Activated naive CD4-positive, alpha-beta T cell treated with anti-CD3 and anti-CD28 coated beads, Interleukin-2, amount 10 ng/mL, durations not matched to agents 7 days and 5 days (primary cell): ENCODE measurements at regions of chr10 and their contacts with region 1.

Region 1: DNA sequence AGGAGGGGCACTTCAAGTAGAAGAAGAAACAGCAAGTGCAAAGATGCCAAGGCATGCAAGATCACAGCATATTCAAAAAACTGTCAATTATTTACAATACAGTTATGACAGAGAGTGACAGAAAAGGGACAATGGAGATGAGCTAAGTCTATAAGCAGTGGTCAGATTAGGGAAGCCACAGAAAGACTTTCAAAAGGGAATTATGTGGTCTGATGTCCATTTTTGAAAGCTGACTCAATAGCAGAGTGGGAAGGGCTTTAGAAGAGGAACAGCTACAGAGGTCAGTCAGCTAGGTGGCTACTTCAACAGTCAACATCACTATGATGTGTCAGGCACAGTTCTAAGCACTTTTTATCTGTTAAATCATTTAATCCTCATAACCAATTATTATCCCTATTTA is 45.2 kb upstream of the SPOCK2 start:
- DNase-seq: no peak
- H3K4me3 Mint-ChIP-seq: no peak overlapping the region
- H3K27ac Mint-ChIP-seq: peak overlapping the region; percentile 1
- H3K4me1 Mint-ChIP-seq: peaks cover 48% of the 10 kb centered on the region
- H3K27me3 Mint-ChIP-seq: no peaks in the 10 kb centered on the region

Region 2: GRCh38 chr10:72218325-72218724 is 84.8 kb after region 1 on chr10:
- CTCF ChIA-PET with region 1: interaction called, 42 read pairs
- DNase-seq: no peak
- H3K4me3 Mint-ChIP-seq: peak overlapping the region; percentile 57
- H3K27ac Mint-ChIP-seq: peak overlapping the region; percentile 81
- H3K4me1 Mint-ChIP-seq: peaks cover 62% of the 10 kb centered on the region
- H3K27me3 Mint-ChIP-seq: no peaks in the 10 kb centered on the region

Region 3: DNA sequence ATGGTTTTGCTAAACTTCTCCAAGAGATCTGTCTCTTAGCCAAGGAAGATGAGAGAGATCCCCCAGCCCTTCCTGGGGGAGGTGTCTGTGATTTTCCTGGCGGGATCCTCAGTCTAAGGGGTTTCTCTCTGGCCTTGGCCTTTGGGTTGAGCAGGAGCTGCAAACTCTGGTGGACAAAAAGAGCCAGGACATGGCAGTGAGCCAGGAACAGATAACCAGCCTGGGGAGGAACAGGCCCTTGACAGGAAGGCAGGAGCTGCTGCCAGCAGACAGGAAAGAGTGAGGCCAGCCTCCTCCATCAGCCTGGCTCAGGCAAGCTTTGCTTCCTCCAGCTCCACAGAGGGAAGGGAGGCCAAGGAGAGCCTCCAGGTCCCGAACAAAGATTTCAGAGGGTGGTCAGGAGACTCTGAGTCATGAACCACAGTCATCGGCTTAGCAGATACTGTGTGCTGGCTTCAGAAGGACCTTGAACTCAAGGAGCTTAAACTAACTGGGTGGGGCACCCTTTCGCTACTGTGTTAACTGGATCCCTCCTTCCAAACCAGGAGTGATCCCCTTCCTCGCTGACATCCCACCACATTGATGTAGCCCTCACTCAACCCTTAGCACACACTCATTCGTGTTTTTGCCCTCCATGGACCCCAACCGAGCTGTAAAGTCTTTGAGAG is 174.9 kb after region 1 on chr10:
- CTCF ChIA-PET with region 1: no interaction called
- DNase-seq: peak; percentile 55
- H3K4me3 Mint-ChIP-seq: no peak overlapping the region
- H3K27ac Mint-ChIP-seq: peak overlapping the region; percentile 79
- H3K4me1 Mint-ChIP-seq: peaks cover 80% of the 10 kb centered on the region
- H3K27me3 Mint-ChIP-seq: no peaks in the 10 kb centered on the region